Breast epithelium (tissue), 4 donors: ENCODE measurements at regions of chr4 and their contacts with region 1.

Region 1: GRCh38 chr4:155066871-155067270 is 141.6 kb upstream of the NPY2R start:
- DNase-seq: no peak
- H3K4me3 ChIP-seq: no peak overlapping the region
- H3K27ac ChIP-seq: no peak overlapping the region
- H3K4me1 ChIP-seq: no peaks in the 10 kb centered on the region
- H3K27me3 ChIP-seq: no peaks in the 10 kb centered on the region
- CTCF ChIP-seq: no peak
- POLR2A ChIP-seq: no peak

Region 2: GRCh38 chr4:155047755-155048154 is 19.1 kb before region 1 on chr4:
- intact Hi-C with region 1: loop called (anchors 1 kb)
- DNase-seq: no peak
- H3K4me3 ChIP-seq: no peak overlapping the region
- H3K27ac ChIP-seq: no peak overlapping the region
- H3K4me1 ChIP-seq: no peaks in the 10 kb centered on the region
- H3K27me3 ChIP-seq: no peaks in the 10 kb centered on the region
- CTCF ChIP-seq: no peak
- POLR2A ChIP-seq: no peak

Region 3: GRCh38 chr4:155497306-155497705 is 430.4 kb after region 1 on chr4:
- intact Hi-C with region 1: no loop called
- DNase-seq: no peak
- H3K4me3 ChIP-seq: no peak overlapping the region
- H3K27ac ChIP-seq: no peak overlapping the region
- H3K4me1 ChIP-seq: no peaks in the 10 kb centered on the region
- H3K27me3 ChIP-seq: no peaks in the 10 kb centered on the region
- CTCF ChIP-seq: no peak
- POLR2A ChIP-seq: no peak